Heart left ventricle (tissue), 16 donors: ENCODE measurements at regions of chrX and their contacts with region 1.

Region 1: GRCh38 chrX:19613645-19614323 is 98.5 kb upstream of the MAP3K15 start:
- DNase-seq: peak in 2 of 5 donors; percentile 35 to 46
- ATAC-seq: peak; percentile 78 to 89 (median 83)
- H3K4me3 ChIP-seq: no peak overlapping the region
- H3K27ac ChIP-seq: peak overlapping the region in 3 of 12 donors; percentile 24 to 37 (median 25)
- H3K4me1 ChIP-seq: peaks cover 0 to 14% (median 6%) of the 10 kb centered on the region in 12 donors
- H3K27me3 ChIP-seq: no peaks in the 10 kb centered on the region
- CTCF ChIP-seq: no peak
- POLR2A ChIP-seq: no peak

Region 2: DNA sequence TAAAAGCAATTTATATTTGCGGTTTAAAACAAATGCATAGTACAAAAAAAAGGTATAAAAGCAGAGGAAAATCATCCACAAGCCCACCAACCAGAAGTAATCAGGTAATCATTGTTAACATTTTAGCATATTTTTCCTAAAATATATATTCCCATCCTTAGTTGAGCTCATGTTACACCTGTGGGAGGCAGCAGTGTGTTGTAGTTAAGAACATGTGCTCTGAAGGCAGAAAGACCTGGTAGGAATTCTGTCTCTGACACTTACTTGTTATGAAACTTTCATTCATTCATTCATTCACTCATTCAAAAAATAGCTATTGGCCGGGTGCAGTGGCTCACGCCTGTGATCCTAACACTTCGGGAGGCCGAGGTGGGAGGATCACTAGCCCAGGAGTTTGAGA is 1203.7 kb before region 1 on chrX:
- intact Hi-C with region 1: no loop called
- DNase-seq: no peak
- ATAC-seq: peak in 2 of 4 donors; percentile 53 to 61
- H3K4me3 ChIP-seq: no peak overlapping the region
- H3K27ac ChIP-seq: no peak overlapping the region
- H3K4me1 ChIP-seq: no peaks in the 10 kb centered on the region
- H3K27me3 ChIP-seq: no peaks in the 10 kb centered on the region
- CTCF ChIP-seq: peak in 10 of 12 donors; percentile 8 to 46 (median 30)
- POLR2A ChIP-seq: no peak

Region 3: GRCh38 chrX:19005910-19006309 is 607.9 kb before region 1 on chrX:
- intact Hi-C with region 1: no loop called
- DNase-seq: no peak
- ATAC-seq: no peak
- H3K4me3 ChIP-seq: no peak overlapping the region
- H3K27ac ChIP-seq: no peak overlapping the region
- H3K4me1 ChIP-seq: no peaks in the 10 kb centered on the region
- H3K27me3 ChIP-seq: no peaks in the 10 kb centered on the region
- CTCF ChIP-seq: no peak
- POLR2A ChIP-seq: no peak

Region 4: GRCh38 chrX:19544693-19545305 is 69.0 kb before region 1 on chrX:
- intact Hi-C with region 1: loop called in 1 of 10 experiments (anchors 10 kb)
- DNase-seq: peak in 3 of 5 donors; percentile 23 to 35 (median 31)
- ATAC-seq: peak; percentile 64 to 84 (median 76)
- H3K4me3 ChIP-seq: no peak overlapping the region
- H3K27ac ChIP-seq: peak overlapping the region in 4 of 12 donors; percentile 18 to 42 (median 30)
- H3K4me1 ChIP-seq: peaks cover 0 to 4% (median 0%) of the 10 kb centered on the region in 12 donors
- H3K27me3 ChIP-seq: no peaks in the 10 kb centered on the region
- CTCF ChIP-seq: peak; percentile 49 to 80 (median 66)
- POLR2A ChIP-seq: no peak